HCT116 (cell line): ENCODE measurements at regions of chr5 and their contacts with region 1.

Region 1: DNA sequence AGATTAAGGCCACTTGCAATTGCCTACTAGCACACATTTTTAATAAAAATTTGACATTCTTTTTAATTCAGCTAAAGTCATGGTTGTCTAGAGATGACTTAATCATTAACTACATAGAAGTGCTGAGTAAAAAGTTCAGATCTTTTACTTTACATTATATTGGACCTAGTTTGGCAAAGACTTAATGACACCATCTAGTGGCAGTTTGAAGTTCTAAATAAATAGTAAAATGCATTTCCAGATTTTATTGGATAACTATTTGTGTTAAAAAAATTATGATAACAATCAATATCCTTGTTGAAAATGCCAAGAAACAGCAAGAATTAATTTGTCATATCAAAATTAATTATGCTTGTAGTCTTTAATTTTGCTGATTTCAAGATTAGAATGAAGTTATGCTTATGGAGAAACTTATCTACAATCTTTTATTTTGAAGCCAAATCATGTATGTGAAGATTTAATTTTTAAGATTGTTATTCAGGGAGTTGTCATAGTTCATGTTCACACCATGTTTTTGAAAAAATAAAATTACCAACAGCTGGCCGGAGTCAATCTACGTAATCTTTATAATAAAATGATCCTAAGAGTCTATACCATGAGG is 69.6 kb upstream of the PJA2 start:
- DNase-seq: no peak
- ATAC-seq: no peak
- H3K4me3 ChIP-seq: no peak overlapping the region
- H3K27ac ChIP-seq: no peak overlapping the region
- H3K4me1 ChIP-seq: no peaks in the 10 kb centered on the region
- H3K27me3 ChIP-seq: no peaks in the 10 kb centered on the region
- CTCF ChIP-seq: peak; percentile 13 to 63 (median 53); a peak in 3 of 6 replicates
- POLR2A ChIP-seq: no peak
- RAD21 ChIP-seq: peak; percentile 68

Region 2: GRCh38 chr5:108481355-108481931 is 997.9 kb before region 1 on chr5:
- CTCF ChIA-PET with region 1: no interaction called
- POLR2A ChIA-PET with region 1: no interaction called
- RAD21 ChIA-PET with region 1: no interaction called
- intact Hi-C with region 1: loop called (anchors 10 kb)
- DNase-seq: peak; percentile 26
- ATAC-seq: peak; percentile 63; the same call in 1 of the 2 replicates
- H3K4me3 ChIP-seq: no peak overlapping the region
- H3K27ac ChIP-seq: no peak overlapping the region
- H3K4me1 ChIP-seq: no peaks in the 10 kb centered on the region
- H3K27me3 ChIP-seq: no peaks in the 10 kb centered on the region
- CTCF ChIP-seq: peak; percentile 38 to 62 (median 40); a peak in 4 of 6 replicates
- POLR2A ChIP-seq: no peak
- RAD21 ChIP-seq: peak; percentile 69

Region 3: GRCh38 chr5:108521841-108522506 is 957.4 kb before region 1 on chr5:
- CTCF ChIA-PET with region 1: no interaction called
- POLR2A ChIA-PET with region 1: no interaction called
- RAD21 ChIA-PET with region 1: no interaction called
- intact Hi-C with region 1: loop called (anchors 5 kb)
- DNase-seq: peak; percentile 52
- ATAC-seq: peak; percentile 95
- H3K4me3 ChIP-seq: no peak overlapping the region
- H3K27ac ChIP-seq: no peak overlapping the region
- H3K4me1 ChIP-seq: no peaks in the 10 kb centered on the region
- H3K27me3 ChIP-seq: no peaks in the 10 kb centered on the region
- CTCF ChIP-seq: peak; percentile 62 to 78 (median 63); a peak in 5 of 6 replicates
- POLR2A ChIP-seq: no peak
- RAD21 ChIP-seq: peak; percentile 77

Region 4: DNA sequence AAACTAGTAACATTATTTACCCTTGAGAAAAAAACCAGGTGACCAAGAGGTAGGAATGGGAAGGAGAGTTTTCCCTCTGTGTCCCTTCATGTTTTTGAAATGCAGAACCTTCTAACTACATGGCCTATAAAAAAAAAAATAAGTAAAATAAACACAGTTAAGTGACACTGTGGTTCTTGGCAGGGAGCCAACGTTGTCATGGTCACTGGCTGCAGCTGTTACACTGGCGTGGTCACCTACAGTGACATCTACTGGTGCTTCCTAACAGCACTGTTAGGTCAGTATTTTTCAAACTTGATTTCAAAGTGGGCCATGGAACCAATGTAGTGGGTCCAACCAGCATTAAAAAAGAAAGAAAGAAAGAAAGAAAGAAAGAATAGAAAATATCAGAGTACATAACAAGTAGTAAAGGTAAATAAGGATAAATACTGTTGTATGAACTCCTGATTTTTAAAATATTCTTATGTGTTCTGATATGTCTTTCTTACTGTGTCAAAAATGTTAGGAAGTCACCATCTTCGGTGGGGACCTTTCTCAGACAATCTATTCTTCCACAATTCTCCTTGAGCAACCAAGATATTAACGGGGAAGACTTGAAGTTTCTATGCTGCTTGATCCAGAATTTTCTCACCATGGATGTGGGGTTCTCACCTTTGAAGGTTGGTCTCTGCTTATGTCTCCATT is 10.5 kb before region 1 on chr5:
- CTCF ChIA-PET with region 1: no interaction called
- POLR2A ChIA-PET with region 1: no interaction called
- RAD21 ChIA-PET with region 1: no interaction called
- intact Hi-C with region 1: no loop called
- DNase-seq: peak; percentile 84
- ATAC-seq: peak; percentile 87
- H3K4me3 ChIP-seq: no peak overlapping the region
- H3K27ac ChIP-seq: no peak overlapping the region
- H3K4me1 ChIP-seq: 0 out of 4 replicates have a peak, but pooled peaks cover 0 to 4% of the 10 kb centered on the region in 2 experiments
- H3K27me3 ChIP-seq: no peaks in the 10 kb centered on the region
- CTCF ChIP-seq: peak; percentile 47 to 82 (median 82); a peak in 4 of 6 replicates
- POLR2A ChIP-seq: no peak
- RAD21 ChIP-seq: peak; percentile 76